ENCODE measurements at regions of chr10 and their contacts with region 1.

Region 1: GRCh38 chr10:126839094-126839761 is 66.0 kb upstream of the DOCK1 start:
- DNase-seq: peak; percentile 73 to 78
- H3K4me3 ChIP-seq: no peak overlapping the region
- H3K4me3 Mint-ChIP-seq: no peak overlapping the region
- H3K27ac Mint-ChIP-seq: peak overlapping the region; percentile 59
- H3K4me1 ChIP-seq: peaks cover 47% of the 10 kb centered on the region
- H3K4me1 Mint-ChIP-seq: peaks cover 20% of the 10 kb centered on the region
- H3K27me3 ChIP-seq: no peaks in the 10 kb centered on the region
- H3K27me3 Mint-ChIP-seq: no peaks in the 10 kb centered on the region
- CTCF ChIP-seq: no peak

Region 2: DNA sequence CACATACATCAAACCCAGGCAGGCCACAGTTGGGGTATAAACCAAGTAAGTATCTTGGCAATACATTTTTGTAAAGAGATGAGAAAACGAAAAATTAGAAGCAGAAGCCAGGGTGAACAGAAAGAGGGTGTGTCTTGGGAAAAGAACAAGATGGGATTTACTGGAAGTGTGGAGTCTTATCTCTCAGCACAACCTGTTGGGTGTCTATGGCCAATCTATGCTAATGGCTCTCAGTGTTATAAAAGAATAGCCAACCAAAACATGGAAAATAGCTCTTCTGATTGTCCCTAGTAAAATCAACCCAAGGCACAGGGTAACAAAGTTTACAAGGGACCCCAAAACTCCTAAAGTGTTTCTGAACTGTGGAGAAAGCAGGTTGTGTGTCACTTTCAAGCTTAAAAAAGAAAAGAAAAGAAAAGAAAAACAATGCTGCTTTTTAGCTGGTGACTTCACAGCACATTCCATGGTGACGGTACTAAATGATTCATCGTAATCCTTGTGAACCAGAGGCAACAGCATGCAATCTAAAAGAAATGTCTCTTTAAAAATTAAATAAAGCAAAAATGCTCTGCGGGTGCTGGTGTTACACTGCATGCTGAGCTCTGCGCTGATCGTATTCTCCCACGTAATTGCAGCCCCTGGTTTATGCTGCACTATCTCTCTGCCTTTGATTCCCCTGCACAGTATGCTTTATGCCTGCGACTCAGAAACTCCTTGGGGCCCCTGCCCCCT is 269.5 kb before region 1 on chr10:
- CTCF ChIA-PET with region 1: no interaction called
- POLR2A ChIA-PET with region 1: no interaction called
- intact Hi-C with region 1: no loop called
- DNase-seq: no peak
- H3K4me3 ChIP-seq: no peak overlapping the region
- H3K4me3 Mint-ChIP-seq: no peak overlapping the region
- H3K27ac Mint-ChIP-seq: no peak overlapping the region
- H3K4me1 ChIP-seq: no peaks in the 10 kb centered on the region
- H3K4me1 Mint-ChIP-seq: no peaks in the 10 kb centered on the region
- H3K27me3 ChIP-seq: no peaks in the 10 kb centered on the region
- H3K27me3 Mint-ChIP-seq: peaks cover 9% of the 10 kb centered on the region
- CTCF ChIP-seq: no peak

Region 3: GRCh38 chr10:126851414-126852108 is 12.3 kb after region 1 on chr10:
- CTCF ChIA-PET with region 1: no interaction called
- POLR2A ChIA-PET with region 1: no interaction called
- intact Hi-C with region 1: loop called (anchors 2 kb)
- DNase-seq: no peak
- H3K4me3 ChIP-seq: no peak overlapping the region
- H3K4me3 Mint-ChIP-seq: no peak overlapping the region
- H3K27ac Mint-ChIP-seq: no peak overlapping the region
- H3K4me1 ChIP-seq: peaks cover 15% of the 10 kb centered on the region; the same call in 1 of the 2 replicates
- H3K4me1 Mint-ChIP-seq: peaks cover 7% of the 10 kb centered on the region
- H3K27me3 ChIP-seq: no peaks in the 10 kb centered on the region
- H3K27me3 Mint-ChIP-seq: no peaks in the 10 kb centered on the region
- CTCF ChIP-seq: no peak

Region 4: DNA sequence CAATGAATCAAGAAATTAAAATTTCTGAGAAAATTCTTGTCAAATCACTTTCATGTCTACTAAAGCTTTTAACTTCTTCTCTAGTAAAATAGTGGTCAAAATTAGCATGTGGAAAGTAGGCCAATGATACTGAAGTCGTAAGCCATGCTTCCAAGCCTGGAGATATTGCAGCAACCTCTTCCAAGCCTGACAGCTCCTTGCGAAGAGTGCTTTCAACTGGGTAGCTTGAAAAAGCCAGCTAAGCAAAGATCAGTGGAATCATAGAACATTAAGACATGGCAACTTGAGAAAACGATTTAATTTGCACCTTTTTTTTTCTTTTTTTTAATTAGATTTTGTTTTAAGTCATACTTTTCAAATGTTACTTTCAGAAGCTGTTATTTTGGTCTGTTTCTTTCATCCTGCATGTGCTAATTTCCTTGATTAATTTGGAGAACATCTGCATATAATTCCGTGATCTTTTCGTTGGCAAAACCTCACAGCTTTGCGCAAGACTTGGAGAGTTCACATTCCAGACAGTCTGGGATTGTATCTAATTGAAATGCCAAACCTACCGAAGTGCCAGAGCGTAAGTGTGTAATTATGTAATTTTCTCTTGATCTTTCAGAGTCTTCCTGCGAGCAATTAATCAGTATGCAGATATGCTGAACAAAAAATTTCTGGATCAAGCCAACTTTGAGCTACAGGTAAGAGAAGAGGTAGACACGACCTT is 499.3 kb after region 1 on chr10:
- CTCF ChIA-PET with region 1: no interaction called
- POLR2A ChIA-PET with region 1: no interaction called
- intact Hi-C with region 1: no loop called
- DNase-seq: no peak
- H3K4me3 ChIP-seq: no peak overlapping the region
- H3K4me3 Mint-ChIP-seq: no peak overlapping the region
- H3K27ac Mint-ChIP-seq: no peak overlapping the region
- H3K4me1 ChIP-seq: no peaks in the 10 kb centered on the region
- H3K4me1 Mint-ChIP-seq: no peaks in the 10 kb centered on the region
- H3K27me3 ChIP-seq: no peaks in the 10 kb centered on the region
- H3K27me3 Mint-ChIP-seq: no peaks in the 10 kb centered on the region
- CTCF ChIP-seq: no peak

Measured in Caco-2 (cell line).